Activated CD8-positive, alpha-beta T cell treated with anti-CD3 and anti-CD28 coated beads, Interleukin-2, amount 10 ng/mL, durations not matched to agents 7 days and 5 days (primary cell): ENCODE measurements at regions of chr12 and their contacts with region 1.

Region 1: GRCh38 chr12:6285063-6285477 is 25.4 kb upstream of the PLEKHG6 start:
- DNase-seq: peak; percentile 71
- ATAC-seq: peak; percentile 86
- H3K4me3 Mint-ChIP-seq: no peak overlapping the region
- H3K27ac Mint-ChIP-seq: no peak overlapping the region
- H3K4me1 Mint-ChIP-seq: peaks cover 4% of the 10 kb centered on the region
- H3K27me3 Mint-ChIP-seq: peaks cover 3% of the 10 kb centered on the region

Region 2: DNA sequence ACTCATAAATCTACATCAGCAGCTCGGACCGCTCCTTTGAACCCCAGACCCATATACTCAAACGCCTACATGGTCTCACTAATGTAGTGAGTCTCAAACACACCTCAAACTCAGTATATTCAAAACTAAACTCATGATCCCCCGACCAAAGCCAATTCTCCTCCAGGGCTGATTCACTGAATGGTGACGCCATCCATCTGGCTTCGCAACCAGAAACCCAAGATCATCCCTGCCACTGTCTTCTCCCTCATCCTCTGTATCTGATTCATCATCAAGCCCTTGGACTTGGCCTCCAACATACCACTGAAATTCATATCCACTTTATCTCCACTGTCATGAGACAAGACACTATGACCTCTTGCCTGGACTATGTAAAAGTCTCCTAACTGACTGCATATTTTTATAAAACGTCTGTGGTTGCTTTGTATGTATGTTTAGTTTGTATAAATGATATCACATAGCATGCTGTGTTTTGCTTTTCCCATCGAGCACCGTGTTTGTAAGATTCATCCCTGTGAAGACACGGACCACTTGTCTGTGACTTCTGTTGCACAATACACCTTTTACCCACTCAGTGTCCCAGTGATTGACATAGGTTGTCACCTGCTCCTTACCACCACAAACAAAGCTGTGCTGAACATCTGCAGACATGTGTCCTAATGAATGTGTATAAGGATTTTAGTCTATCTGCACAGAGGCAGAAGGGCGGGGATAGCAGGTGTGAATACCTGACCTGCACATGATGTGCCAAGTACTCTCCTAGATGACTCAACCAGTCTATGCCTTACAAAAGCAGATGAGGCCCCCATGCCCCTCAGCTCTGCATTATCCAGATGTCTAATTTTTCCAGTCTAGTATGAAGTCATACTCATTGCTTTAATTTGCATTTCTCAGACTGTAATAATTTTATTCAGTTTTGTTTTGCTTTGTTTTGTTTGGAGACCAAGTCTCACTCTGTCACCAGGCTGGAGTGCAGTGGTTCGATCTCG is 237.5 kb before region 1 on chr12:
- CTCF ChIA-PET with region 1: no interaction called
- POLR2A ChIA-PET with region 1: no interaction called
- DNase-seq: no peak
- ATAC-seq: no peak
- H3K4me3 Mint-ChIP-seq: no peak overlapping the region
- H3K27ac Mint-ChIP-seq: no peak overlapping the region
- H3K4me1 Mint-ChIP-seq: no peaks in the 10 kb centered on the region
- H3K27me3 Mint-ChIP-seq: peaks cover 5% of the 10 kb centered on the region

Region 3: DNA sequence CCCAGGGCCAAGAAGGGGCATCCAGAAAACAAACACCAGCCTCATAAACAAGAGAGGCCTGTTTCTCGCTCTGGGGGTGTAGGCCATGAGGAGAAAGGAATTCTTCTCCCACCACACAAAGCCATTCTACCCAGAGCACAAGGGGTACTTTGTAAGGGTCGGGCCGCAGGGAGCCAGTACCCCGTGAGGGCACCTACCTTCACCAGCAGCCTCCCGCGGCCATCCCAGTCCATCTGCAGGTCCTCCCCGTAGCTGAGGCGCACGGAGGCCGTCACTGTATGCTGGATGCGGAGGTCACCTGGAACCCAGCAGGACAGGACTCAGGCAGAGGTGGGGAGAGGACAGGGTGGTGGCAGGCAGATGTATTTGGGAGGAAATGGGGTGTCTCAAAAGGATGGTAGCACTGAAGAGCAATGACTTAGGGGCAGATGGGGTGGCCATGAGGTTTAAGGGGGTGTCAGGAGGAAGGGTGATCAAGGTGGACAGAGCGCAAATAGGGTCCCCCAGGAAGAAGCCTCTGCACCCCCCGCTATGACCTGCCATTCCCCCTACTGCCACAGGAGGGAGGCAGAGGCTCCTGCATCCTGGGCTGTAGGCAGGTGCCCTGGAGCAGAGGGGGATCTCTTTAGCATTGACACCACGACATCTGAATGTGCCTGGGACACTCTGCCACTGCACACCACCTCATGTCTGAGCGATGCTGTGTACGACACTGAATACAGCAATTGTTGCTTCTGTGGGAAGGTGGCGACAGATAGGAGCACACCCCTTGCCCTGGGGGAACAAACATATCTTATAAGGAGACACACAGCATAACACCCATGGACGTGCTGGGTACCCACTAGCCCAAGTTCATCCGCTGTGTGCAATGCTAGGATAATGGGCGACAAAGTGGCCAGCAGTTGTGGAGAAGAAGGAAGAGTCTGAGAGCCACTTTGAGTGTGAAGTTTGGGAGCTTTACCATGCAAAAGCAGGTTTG is 222.0 kb before region 1 on chr12:
- CTCF ChIA-PET with region 1: interaction called, 20 read pairs
- POLR2A ChIA-PET with region 1: no interaction called
- DNase-seq: peak; percentile 73
- ATAC-seq: peak; percentile 84
- H3K4me3 Mint-ChIP-seq: no peak overlapping the region
- H3K27ac Mint-ChIP-seq: no peak overlapping the region
- H3K4me1 Mint-ChIP-seq: no peaks in the 10 kb centered on the region
- H3K27me3 Mint-ChIP-seq: peaks cover 6% of the 10 kb centered on the region

Region 4: GRCh38 chr12:6272300-6273204 is 12.5 kb before region 1 on chr12:
- CTCF ChIA-PET with region 1: interaction called, 10 read pairs
- POLR2A ChIA-PET with region 1: no interaction called
- DNase-seq: no peak
- ATAC-seq: no peak
- H3K4me3 Mint-ChIP-seq: no peak overlapping the region
- H3K27ac Mint-ChIP-seq: no peak overlapping the region
- H3K4me1 Mint-ChIP-seq: no peaks in the 10 kb centered on the region
- H3K27me3 Mint-ChIP-seq: peaks cover 17% of the 10 kb centered on the region

Region 5: GRCh38 chr12:6778574-6779550 is 493.8 kb after region 1 on chr12:
- CTCF ChIA-PET with region 1: no interaction called
- POLR2A ChIA-PET with region 1: no interaction called
- DNase-seq: peak; percentile 94
- ATAC-seq: peak; percentile 79
- H3K4me3 Mint-ChIP-seq: peak overlapping the region; percentile 66
- H3K27ac Mint-ChIP-seq: peak overlapping the region; percentile 79
- H3K4me1 Mint-ChIP-seq: peaks cover 59% of the 10 kb centered on the region
- H3K27me3 Mint-ChIP-seq: no peaks in the 10 kb centered on the region